ENCODE measurements at regions of chrX and their contacts with region 1.

Region 1: DNA sequence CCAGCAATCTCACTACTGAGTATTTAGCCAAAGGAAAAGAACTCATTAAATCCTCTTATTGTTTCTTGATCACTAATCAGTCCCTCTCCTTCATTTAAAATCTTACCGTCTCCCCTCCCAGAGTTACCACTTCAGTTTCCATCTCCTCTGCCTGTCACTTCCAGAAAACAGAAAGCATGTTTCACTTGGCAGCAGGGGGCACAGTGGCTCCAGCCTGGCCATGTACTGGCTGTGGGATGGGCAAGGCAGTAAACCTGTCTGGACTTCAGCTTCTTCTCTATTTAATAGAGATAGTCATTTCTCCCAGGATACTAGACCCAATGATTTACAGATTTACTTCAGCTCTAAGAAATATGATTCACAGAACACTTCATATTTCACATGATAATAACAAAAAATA is 63.2 kb downstream of the CD40LG start:
- DNase-seq: peak in 1 of 2 experiments; percentile 40
- H3K4me3 ChIP-seq: no peak overlapping the region
- H3K4me1 ChIP-seq: peaks cover 15% of the 10 kb centered on the region
- H3K27me3 ChIP-seq: no peaks in the 10 kb centered on the region

Region 2: DNA sequence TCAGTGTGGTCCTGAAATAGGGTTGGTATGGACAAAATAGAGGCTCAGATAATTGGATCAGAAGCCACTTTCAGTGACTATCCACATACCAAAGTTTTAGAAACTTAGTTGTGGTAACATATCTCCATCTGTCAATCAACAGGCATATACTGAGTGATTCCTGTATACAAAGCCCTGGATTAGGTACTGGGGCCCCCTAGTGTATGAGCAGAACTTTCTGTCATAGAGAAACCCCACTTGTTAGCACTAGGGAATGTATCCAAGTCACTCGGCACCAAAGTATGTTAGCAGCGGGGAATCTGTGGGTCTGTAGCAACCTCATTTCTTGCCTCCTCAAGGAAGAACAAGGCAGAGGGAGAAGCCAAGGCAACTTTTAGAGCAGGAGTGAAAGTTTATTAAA is 510.7 kb before region 1 on chrX:
- in situ Hi-C with region 1: no loop called
- DNase-seq: peak in 1 of 2 experiments; percentile 40
- H3K4me3 ChIP-seq: no peak overlapping the region
- H3K4me1 ChIP-seq: peaks cover 28% of the 10 kb centered on the region
- H3K27me3 ChIP-seq: no peaks in the 10 kb centered on the region

Region 3: DNA sequence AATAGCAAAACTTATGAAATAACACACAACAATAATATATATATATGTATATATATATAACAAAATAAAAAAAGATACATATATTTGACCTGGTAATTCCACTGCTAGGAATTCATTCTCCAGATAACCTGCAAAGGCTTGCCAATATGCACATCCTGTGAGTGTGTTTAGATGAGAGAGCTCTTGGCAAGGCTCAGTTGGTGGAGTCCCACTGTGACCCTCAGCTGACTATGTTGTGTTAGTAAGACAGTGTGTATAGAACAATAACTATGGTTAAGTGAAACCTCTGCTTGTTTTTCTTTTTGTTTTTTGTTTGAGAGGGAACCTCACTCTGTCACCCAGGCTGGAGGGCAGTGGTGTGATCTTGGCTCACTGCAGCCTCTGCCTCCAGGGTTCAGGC is 208.9 kb after region 1 on chrX:
- in situ Hi-C with region 1: loop called (anchors 10 kb)
- DNase-seq: no peak
- H3K4me3 ChIP-seq: no peak overlapping the region
- H3K4me1 ChIP-seq: no peaks in the 10 kb centered on the region
- H3K27me3 ChIP-seq: no peaks in the 10 kb centered on the region

Measured in HAP-1 (cell line).